ENCODE measurements at regions of chr13 and their contacts with region 1.

Region 1: GRCh38 chr13:44435142-44435982 is 61.7 kb downstream of the SERP2 start:
- DNase-seq: peak; percentile 97
- H3K4me3 ChIP-seq: peak overlapping the region; percentile 71 to 91 (median 88)
- H3K27ac ChIP-seq: peak overlapping the region; percentile 97
- H3K4me1 ChIP-seq: peaks cover 19% of the 10 kb centered on the region
- H3K27me3 ChIP-seq: no peaks in the 10 kb centered on the region
- CTCF ChIP-seq: no peak

Region 2: GRCh38 chr13:43905435-43906031 is 529.8 kb before region 1 on chr13:
- CTCF ChIA-PET with region 1: no interaction called
- dilution Hi-C with region 1: no loop called
- in situ Hi-C with region 1: loop called (anchors 5 to 10 kb)
- intact Hi-C with region 1: loop called (anchors 1 kb)
- DNase-seq: peak; percentile 48
- H3K4me3 ChIP-seq: no peak overlapping the region
- H3K27ac ChIP-seq: no peak overlapping the region
- H3K4me1 ChIP-seq: peaks cover 3% of the 10 kb centered on the region
- H3K27me3 ChIP-seq: no peaks in the 10 kb centered on the region
- CTCF ChIP-seq: peak; percentile 62 to 79

Region 3: DNA sequence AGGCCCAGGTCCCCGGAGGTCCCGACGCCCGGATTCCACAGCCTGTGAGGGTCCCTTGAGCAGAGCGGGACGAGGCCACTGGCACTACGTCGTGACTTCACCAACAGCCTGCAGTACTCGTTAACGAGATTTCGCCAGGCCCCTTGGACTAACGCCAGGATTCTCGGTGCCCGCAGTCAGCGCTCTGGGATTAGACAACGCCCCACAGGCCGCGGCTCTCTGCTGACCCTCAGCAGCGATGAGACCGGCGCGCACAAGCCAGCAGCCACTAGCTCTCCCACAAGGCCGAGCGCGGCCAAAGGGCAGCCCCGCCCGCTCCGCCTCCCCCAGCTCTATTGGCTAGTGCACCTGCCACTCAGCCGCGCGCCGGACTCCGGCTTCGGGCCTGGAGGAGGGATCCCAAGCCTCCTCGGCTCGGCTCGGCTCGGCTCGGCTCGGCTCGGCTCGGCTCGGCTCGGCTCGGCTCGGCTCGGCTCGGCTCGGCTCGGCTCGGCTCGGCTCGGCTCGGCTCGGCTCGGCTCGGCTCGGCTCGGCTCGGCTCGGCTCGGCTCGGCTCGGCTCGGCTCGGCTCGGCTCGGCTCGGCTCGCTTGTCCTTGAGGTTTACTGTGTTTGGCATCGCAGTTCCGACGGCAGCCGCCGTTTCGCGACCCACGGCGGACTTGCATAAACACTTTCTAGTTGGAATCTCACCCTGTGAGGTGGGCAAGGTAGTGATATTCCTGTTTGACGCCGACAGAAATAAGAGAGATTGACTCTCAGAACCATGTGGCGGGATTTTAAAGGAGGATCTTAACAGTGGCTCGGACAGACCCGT is 293.4 kb before region 1 on chr13:
- CTCF ChIA-PET with region 1: no interaction called
- dilution Hi-C with region 1: no loop called
- in situ Hi-C with region 1: no loop called
- intact Hi-C with region 1: loop called (anchors 1 kb)
- DNase-seq: peak; percentile 95
- H3K4me3 ChIP-seq: peak overlapping the region; percentile 56 to 59 (median 57)
- H3K27ac ChIP-seq: peak overlapping the region; percentile 90
- H3K4me1 ChIP-seq: peaks cover 26% of the 10 kb centered on the region
- H3K27me3 ChIP-seq: no peaks in the 10 kb centered on the region
- CTCF ChIP-seq: no peak

Region 4: DNA sequence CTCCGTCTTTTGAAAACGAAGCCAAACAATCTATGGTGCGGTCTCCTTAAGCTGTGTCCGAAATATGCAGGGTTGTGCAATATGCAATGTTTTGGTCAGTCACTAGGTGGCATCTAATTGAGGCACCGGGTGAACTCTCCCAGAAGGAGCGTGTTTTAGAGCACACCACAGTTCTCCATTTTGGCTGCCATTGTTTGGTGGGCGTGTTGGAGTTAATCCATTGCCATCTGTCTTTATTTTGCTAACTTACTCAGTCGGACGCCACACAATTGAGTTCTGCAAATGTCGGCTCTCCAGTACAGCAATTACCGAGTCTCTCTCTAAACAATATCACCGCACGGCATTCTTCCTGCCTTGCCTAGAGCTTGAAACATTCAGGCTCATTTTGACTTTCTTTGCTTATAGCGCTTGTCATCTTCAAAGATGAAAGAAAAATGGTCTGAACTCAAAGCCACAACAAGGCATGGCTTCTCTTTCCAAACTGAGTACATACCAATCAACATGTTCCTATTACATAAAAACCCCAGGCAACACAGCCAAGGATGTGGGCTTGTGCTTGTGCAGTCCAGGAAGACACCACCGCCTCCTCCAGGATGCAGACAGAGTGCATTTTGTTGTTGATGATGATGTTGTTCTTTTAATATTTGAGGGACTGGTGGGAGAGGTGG is 243.7 kb before region 1 on chr13:
- CTCF ChIA-PET with region 1: no interaction called
- dilution Hi-C with region 1: no loop called
- in situ Hi-C with region 1: loop called in 1 of 2 experiments (anchors 10 kb)
- intact Hi-C with region 1: loop called (anchors 1 kb)
- DNase-seq: peak; percentile 70
- H3K4me3 ChIP-seq: no peak overlapping the region
- H3K27ac ChIP-seq: no peak overlapping the region
- H3K4me1 ChIP-seq: peaks cover 26% of the 10 kb centered on the region
- H3K27me3 ChIP-seq: no peaks in the 10 kb centered on the region
- CTCF ChIP-seq: peak; percentile 53 to 62

Region 5: DNA sequence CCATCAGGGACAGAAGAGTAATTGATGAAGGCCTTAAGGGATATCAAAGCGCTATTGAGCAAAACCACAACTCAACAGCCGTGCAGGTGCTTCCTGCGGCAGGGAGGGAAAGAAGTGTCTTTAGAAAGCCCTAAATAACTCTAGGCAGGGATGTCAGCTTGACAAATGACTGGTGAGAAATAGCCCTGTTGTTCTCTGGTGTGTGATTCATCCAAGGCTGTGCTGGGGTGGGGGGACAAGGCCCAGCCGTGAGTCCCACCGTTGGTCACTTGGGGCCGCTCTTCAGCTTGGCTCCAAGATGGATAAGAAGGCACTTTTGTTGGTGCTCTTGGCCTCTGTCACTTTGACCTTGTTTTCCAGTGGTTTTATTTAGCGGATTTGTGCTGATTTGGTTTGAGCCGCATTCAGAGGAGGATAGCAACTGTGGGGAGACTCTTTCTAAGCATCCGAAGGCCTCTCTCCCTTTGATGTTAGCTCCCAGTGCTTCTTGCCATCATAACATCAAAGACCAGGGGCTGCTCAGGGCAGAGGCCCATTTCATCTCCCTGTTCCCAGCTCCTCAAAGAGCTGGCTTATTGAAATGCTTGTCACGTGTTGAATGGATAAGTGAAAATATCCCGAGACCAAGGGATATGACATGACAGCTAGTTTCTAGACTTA is 192.0 kb before region 1 on chr13:
- CTCF ChIA-PET with region 1: interaction called, 3 read pairs
- dilution Hi-C with region 1: no loop called
- in situ Hi-C with region 1: no loop called
- intact Hi-C with region 1: loop called (anchors 1 kb)
- DNase-seq: peak; percentile 78
- H3K4me3 ChIP-seq: no peak overlapping the region
- H3K27ac ChIP-seq: no peak overlapping the region
- H3K4me1 ChIP-seq: peaks cover 2% of the 10 kb centered on the region
- H3K27me3 ChIP-seq: no peaks in the 10 kb centered on the region
- CTCF ChIP-seq: no peak

Region 6: DNA sequence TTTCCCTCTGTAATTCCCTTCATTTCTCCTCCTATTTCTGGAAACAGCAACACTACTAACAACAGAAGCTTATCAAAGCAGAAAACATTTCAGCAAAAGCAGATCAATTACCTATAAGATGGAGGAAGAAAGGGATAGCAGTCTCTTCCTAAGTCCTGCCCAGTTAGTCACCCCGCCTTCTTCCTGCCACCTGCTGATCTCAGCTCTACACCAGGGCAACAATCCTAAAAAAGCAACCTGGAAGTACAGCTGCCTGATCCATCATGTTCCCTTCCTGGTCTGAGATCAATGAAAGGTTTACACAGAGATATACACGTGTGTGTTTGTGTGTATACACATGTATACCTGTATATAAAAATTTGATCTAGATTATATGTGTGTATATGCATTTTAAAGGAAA is 81.4 kb after region 1 on chr13:
- CTCF ChIA-PET with region 1: no interaction called
- dilution Hi-C with region 1: no loop called
- in situ Hi-C with region 1: no loop called
- intact Hi-C with region 1: no loop called
- DNase-seq: no peak
- H3K4me3 ChIP-seq: no peak overlapping the region
- H3K27ac ChIP-seq: no peak overlapping the region
- H3K4me1 ChIP-seq: no peaks in the 10 kb centered on the region
- H3K27me3 ChIP-seq: no peaks in the 10 kb centered on the region
- CTCF ChIP-seq: no peak

Region 7: DNA sequence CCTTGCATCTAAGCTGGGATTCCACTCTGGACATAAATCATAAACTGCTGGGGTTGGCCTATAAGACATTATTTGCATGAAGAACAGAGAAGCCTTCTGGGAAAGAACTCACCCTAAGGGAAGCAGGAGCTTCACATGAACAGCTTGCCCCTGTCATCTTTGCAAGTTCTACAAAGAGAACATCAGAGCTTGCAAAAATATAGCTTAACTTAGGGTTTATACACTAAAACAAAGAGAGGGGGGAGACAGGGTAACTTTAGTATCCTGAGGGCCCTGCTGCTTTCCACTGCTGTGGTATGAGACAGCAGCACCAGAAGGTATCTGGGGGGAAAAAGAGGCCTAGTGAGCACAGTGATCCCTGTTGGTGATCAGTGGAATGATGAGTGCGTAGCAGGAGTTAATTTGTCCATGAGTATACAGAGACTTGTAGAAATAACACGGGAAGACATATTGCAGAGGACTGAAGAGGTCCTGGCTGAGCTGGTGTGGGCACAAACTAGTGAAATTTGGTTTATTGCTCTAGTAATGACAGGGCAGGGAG is 256.9 kb after region 1 on chr13:
- CTCF ChIA-PET with region 1: no interaction called
- dilution Hi-C with region 1: no loop called
- in situ Hi-C with region 1: no loop called
- intact Hi-C with region 1: no loop called
- DNase-seq: peak; percentile 52
- H3K4me3 ChIP-seq: no peak overlapping the region
- H3K27ac ChIP-seq: no peak overlapping the region
- H3K4me1 ChIP-seq: no peaks in the 10 kb centered on the region
- H3K27me3 ChIP-seq: no peaks in the 10 kb centered on the region
- CTCF ChIP-seq: no peak

Measured in mammary epithelial cell (primary cell).